SK-N-SH (cell line): ENCODE measurements at regions of chr6 and their contacts with region 1.

Region 1: GRCh38 chr6:8131256-8131897 is 29.0 kb upstream of the EEF1E1 start:
- DNase-seq: peak; percentile 58
- H3K4me3 ChIP-seq: peak overlapping the region in 1 of 2 experiments; percentile 39; a peak in 1 of 4 replicates
- H3K27ac ChIP-seq: no peak overlapping the region
- H3K4me1 ChIP-seq: no peaks in the 10 kb centered on the region; a peak in 1 of 4 replicates
- H3K27me3 ChIP-seq: no peaks in the 10 kb centered on the region; the same call in 1 of the 2 replicates
- CTCF ChIP-seq: peak; percentile 75
- EP300 ChIP-seq: no peak
- RAD21 ChIP-seq: peak; percentile 92

Region 2: GRCh38 chr6:8054276-8054675 is 77.1 kb before region 1 on chr6:
- CTCF ChIA-PET with region 1: no interaction called
- POLR2A ChIA-PET with region 1: no interaction called
- DNase-seq: no peak
- H3K4me3 ChIP-seq: no peak overlapping the region
- H3K27ac ChIP-seq: no peak overlapping the region
- H3K4me1 ChIP-seq: no peaks in the 10 kb centered on the region
- H3K27me3 ChIP-seq: no peaks in the 10 kb centered on the region
- CTCF ChIP-seq: no peak
- EP300 ChIP-seq: no peak
- RAD21 ChIP-seq: no peak

Region 3: GRCh38 chr6:8113131-8113654 is 18.2 kb before region 1 on chr6:
- CTCF ChIA-PET with region 1: interaction called, 10 read pairs
- POLR2A ChIA-PET with region 1: no interaction called
- DNase-seq: no peak
- H3K4me3 ChIP-seq: no peak overlapping the region
- H3K27ac ChIP-seq: no peak overlapping the region
- H3K4me1 ChIP-seq: peaks cover 0 to 10% of the 10 kb centered on the region in 2 experiments; a peak in 2 of 4 replicates
- H3K27me3 ChIP-seq: no peaks in the 10 kb centered on the region
- CTCF ChIP-seq: no peak
- EP300 ChIP-seq: no peak
- RAD21 ChIP-seq: no peak

Region 4: DNA sequence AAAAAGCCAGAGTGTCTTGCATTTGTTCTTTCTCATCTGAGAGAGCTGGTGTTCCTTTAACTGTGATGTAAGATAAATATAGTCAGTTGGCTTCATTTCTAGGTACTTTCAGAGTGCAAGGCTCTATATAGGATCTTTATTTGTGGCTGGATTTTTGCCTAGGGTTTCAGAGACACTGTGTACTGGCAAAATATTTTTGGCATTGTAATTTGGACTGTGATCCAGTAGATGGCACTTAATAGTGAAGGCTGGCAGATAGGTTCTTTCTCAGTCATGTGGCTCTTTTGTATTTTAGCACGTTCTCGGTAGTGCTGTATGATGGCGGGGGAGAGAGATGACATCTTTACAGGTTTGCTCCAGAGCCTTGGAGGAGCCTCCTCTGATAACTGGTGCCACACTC is 330.8 kb after region 1 on chr6:
- CTCF ChIA-PET with region 1: no interaction called
- POLR2A ChIA-PET with region 1: no interaction called
- DNase-seq: no peak
- H3K4me3 ChIP-seq: no peak overlapping the region
- H3K27ac ChIP-seq: no peak overlapping the region
- H3K4me1 ChIP-seq: no peaks in the 10 kb centered on the region
- H3K27me3 ChIP-seq: no peaks in the 10 kb centered on the region
- CTCF ChIP-seq: no peak
- EP300 ChIP-seq: no peak
- RAD21 ChIP-seq: no peak

Region 5: GRCh38 chr6:8499540-8499939 is 368.2 kb after region 1 on chr6:
- CTCF ChIA-PET with region 1: interaction called, 21 read pairs
- POLR2A ChIA-PET with region 1: no interaction called
- DNase-seq: peak; percentile 2
- H3K4me3 ChIP-seq: no peak overlapping the region
- H3K27ac ChIP-seq: no peak overlapping the region
- H3K4me1 ChIP-seq: no peaks in the 10 kb centered on the region
- H3K27me3 ChIP-seq: no peaks in the 10 kb centered on the region
- CTCF ChIP-seq: peak; percentile 31
- EP300 ChIP-seq: no peak
- RAD21 ChIP-seq: peak; percentile 70